ENCODE measurements at regions of chr17 and their contacts with region 1.

Region 1: DNA sequence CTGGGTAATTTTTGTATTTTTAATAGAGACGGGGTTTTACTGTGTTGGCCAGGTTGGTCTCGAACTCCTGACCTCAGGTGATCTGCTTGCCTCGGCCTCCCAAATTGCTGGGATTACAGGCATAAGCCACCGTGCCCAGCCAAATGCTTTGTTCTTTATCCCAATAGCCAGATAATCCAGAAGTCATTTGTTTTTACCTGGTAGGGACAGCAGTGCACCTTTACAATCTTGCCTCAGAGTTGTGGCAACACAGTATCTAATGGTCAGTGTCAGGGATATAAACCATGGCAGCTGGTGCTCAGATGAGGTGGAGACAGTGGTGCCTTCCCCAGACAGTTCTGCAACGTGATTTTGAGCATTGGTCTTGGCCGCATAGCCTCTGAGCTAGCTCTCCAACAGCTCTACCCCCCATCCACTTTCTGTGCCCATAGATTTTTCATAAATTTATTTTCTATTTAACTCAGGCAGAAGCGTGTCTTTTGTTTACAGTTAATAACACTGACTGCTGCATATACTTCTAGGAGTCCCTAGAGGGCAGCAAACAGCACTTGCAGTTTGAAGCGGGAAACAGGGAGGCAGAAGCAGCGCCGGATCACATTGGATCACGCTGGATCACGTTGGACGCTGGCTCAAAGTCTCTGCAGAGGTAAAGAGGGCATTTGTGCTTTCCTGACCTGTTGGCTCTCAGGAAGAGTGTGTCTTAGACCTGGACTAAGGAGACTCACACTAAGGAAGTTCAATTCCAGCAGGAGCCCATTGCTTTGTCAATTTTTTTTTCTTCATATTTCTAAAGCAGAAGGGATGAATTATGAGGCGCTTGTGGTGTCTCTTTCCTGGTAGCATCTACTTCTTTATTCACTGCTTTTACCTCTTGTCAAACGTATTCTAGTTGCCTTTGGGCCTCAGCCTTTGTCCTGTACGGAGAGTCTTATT is 5.1 kb upstream of the GGT6 start:
- DNase-seq: peak; percentile 38
- H3K4me3 ChIP-seq: no peak overlapping the region
- H3K27ac ChIP-seq: no peak overlapping the region
- H3K27me3 ChIP-seq: peaks cover 17% of the 10 kb centered on the region
- CTCF ChIP-seq: peak; percentile 93

Region 2: DNA sequence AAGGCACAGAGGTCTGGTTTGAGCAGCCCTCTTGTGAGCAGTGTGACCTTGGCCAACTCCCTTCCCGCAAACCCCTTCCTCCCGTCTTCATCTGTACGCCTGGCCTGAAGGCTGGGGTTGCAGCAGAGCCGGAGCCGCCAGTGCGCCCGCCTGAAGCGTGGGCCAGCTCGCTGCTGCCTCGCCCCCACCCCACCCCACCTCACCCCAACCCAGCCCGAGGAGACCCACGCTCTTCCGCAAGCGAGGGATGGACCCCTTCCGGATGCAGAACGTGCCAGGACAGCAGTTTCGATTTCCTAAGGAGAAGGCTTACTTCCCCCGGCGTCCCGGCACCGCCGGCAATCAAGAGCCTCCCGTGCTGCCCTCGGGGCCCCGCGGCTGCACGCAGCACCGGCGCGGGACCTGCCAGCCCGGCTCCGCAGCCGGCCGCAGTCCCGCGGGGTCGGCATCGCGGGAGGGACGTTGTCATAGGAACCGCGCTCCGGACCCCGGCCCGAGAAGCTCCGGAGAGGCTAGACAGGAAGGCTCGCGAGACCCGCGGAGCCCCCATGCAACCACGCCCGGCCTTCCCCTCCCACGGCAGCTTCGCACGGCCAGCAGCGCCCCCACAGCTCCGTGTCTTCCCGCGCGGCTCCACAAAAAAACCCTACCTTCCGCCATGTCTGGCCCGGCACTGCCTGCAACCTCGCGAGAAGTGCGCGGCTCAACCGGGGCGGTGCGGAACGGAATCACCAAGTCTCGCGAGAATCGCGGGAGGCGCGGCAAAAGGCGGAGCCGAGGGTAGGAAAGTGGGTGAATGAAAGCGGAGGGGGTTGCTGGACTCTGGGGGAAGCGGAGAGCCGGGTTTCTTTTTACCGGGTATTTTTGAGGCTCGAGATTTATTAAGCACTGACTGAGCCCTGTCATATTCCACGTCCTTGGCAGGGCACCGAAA is 301.9 kb before region 1 on chr17 and contains the start of gene ANKFY1:
- CTCF ChIA-PET with region 1: no interaction called
- POLR2A ChIA-PET with region 1: no interaction called
- DNase-seq: peak; percentile 85
- H3K4me3 ChIP-seq: peak within 1 kb of the TSS; percentile 94
- H3K27ac ChIP-seq: peak within 1 kb of the TSS; percentile 68
- H3K27me3 ChIP-seq: no peaks in the 10 kb centered on the region
- CTCF ChIP-seq: peak; percentile 9; the same call in 1 of the 2 replicates
- polyA plus RNA-seq, gene ANKFY1: 38.8 and 42.8 TPM in 2 replicates

Region 3: GRCh38 chr17:4394208-4395110 is 171.0 kb before region 1 on chr17:
- CTCF ChIA-PET with region 1: no interaction called
- POLR2A ChIA-PET with region 1: no interaction called
- DNase-seq: no peak
- H3K4me3 ChIP-seq: no peak overlapping the region
- H3K27ac ChIP-seq: no peak overlapping the region
- H3K27me3 ChIP-seq: peaks cover 9% of the 10 kb centered on the region
- CTCF ChIP-seq: no peak

Region 4: GRCh38 chr17:4554997-4555799 is 10.3 kb before region 1 on chr17 and contains the start of gene MYBBP1A:
- CTCF ChIA-PET with region 1: interaction called, 21 read pairs
- POLR2A ChIA-PET with region 1: interaction called, 3 read pairs
- DNase-seq: peak; percentile 85
- H3K4me3 ChIP-seq: peak within 1 kb of the TSS; percentile 97
- H3K27ac ChIP-seq: peak within 1 kb of the TSS; percentile 78
- H3K27me3 ChIP-seq: no peaks in the 10 kb centered on the region
- CTCF ChIP-seq: peak; percentile 31; the same call in 1 of the 2 replicates
- polyA plus RNA-seq, gene MYBBP1A: 12.5 and 14.7 TPM in 2 replicates

Region 5: DNA sequence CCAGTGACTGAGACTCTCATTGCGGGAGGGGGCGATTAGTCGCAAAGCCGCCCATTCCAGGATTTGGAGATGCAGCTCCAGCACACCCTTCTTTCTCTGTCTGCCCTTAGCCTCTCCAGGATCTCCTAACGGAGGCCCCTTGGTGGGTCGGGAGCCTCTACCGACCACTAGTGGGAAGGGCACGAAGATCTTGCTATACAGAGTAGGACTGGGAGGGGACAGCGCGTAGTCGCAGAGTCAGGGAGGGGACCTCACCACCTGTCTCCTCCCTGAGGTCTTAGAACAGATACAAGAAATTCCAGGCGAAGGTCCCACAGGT is 18.3 kb after region 1 on chr17:
- CTCF ChIA-PET with region 1: interaction called, 12 read pairs
- POLR2A ChIA-PET with region 1: no interaction called
- DNase-seq: no peak
- H3K4me3 ChIP-seq: no peak overlapping the region
- H3K27ac ChIP-seq: no peak overlapping the region
- H3K27me3 ChIP-seq: peaks cover 67% of the 10 kb centered on the region
- CTCF ChIP-seq: peak; percentile 45

Region 6: GRCh38 chr17:4607773-4608187 is 42.3 kb after region 1 on chr17:
- CTCF ChIA-PET with region 1: interaction called, 18 read pairs
- POLR2A ChIA-PET with region 1: no interaction called
- DNase-seq: no peak
- H3K4me3 ChIP-seq: no peak overlapping the region
- H3K27ac ChIP-seq: no peak overlapping the region
- H3K27me3 ChIP-seq: peaks cover 26% of the 10 kb centered on the region
- CTCF ChIP-seq: no peak

Region 7: DNA sequence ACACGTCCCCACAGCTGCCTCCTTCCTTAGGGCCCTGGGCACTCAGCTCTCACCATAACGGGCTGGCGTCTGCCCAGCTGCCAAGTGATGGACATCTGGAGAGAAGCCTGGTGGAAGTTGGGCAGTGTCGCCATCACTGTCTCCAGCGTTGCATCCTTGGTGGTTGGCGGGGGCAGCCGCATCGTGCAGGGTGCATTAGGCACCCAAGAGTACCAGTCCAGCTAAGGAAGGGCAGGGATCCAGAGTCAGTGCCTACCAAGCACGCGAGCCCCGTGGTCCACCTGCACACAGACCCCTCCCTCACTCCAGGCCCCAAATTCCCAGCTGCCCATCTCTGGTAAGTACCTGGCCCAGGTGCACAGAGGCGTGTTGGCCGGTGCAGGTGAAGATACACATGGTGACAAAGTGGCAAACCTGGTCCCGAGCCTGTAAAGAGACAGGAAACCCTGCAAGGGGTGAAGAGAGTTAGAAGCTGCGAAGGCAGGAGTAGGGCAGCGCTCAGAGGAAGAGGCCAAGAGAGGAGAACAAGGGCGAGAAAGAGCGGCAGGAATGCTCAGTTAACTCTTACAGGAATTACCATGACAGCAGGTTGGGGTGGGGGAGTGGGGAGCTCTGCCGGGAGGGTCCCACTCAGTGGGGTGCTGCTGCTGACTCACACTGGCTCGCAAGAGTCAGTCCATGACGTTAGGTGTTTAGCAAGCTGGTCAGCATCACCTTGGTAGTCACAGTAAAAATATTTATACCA is 66.5 kb after region 1 on chr17:
- CTCF ChIA-PET with region 1: interaction called, 295 read pairs
- POLR2A ChIA-PET with region 1: no interaction called
- DNase-seq: no peak
- H3K4me3 ChIP-seq: no peak overlapping the region
- H3K27ac ChIP-seq: no peak overlapping the region
- H3K27me3 ChIP-seq: peaks cover 34% of the 10 kb centered on the region
- CTCF ChIP-seq: no peak

Region 8: DNA sequence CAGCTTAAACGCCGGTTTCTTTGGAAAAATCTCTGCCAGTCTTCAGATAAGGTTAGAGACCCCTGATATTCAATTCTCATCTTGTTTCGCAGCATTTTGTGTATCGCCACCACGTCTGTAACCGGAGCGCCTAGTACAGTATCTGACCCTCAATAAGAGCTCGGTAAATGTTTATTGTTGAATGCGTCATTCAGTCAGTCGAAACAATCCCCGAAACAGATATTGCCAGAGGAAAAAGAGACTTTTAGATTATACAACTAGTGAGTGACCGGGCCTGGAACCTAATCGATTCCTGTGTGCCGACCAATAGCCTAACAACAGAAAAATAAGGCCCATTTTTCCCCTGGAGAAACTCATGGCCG is 137.8 kb after region 1 on chr17:
- CTCF ChIA-PET with region 1: interaction called, 14 read pairs
- POLR2A ChIA-PET with region 1: no interaction called
- DNase-seq: no peak
- H3K4me3 ChIP-seq: peak overlapping the region; percentile 96
- H3K27ac ChIP-seq: no peak overlapping the region
- H3K27me3 ChIP-seq: no peaks in the 10 kb centered on the region
- CTCF ChIP-seq: no peak